Psoas muscle (tissue), 8 donors: ENCODE measurements at regions of chr17 and their contacts with region 1.

Region 1: GRCh38 chr17:32840241-32840640 is 36.7 kb downstream of the MYO1D start:
- DNase-seq: no peak
- ATAC-seq: no peak
- H3K4me3 ChIP-seq: no peak overlapping the region
- H3K27ac ChIP-seq: no peak overlapping the region
- H3K4me1 ChIP-seq: no peaks in the 10 kb centered on the region
- H3K27me3 ChIP-seq: peaks cover 0 to 3% (median 2%) of the 10 kb centered on the region in 3 donors
- CTCF ChIP-seq: no peak

Region 2: GRCh38 chr17:32609085-32609484 is 231.2 kb before region 1 on chr17:
- intact Hi-C with region 1: no loop called
- DNase-seq: peak; percentile 56 to 75
- ATAC-seq: peak; percentile 73 to 90 (median 88)
- H3K4me3 ChIP-seq: no peak overlapping the region
- H3K27ac ChIP-seq: no peak overlapping the region
- H3K4me1 ChIP-seq: no peaks in the 10 kb centered on the region
- H3K27me3 ChIP-seq: no peaks in the 10 kb centered on the region
- CTCF ChIP-seq: peak; percentile 45

Region 3: DNA sequence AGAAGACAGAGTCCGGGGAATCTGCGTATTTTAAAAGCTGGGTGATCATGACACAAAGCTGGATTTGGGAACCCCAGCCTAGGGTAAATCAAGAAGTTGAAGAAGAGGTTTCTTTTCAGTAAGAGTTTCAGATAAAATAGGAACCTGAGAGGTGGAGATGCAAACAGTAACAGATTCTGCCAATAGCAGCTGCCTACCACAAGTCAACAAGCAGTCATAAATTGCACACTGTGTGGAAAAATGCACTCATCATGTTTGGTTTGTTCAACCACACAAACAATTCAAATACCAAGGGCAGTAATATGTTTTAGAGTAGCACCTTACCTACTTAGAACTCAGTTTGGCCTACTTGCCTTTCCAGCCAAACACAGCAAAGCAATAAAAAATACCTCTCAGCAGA is 22.7 kb after region 1 on chr17:
- intact Hi-C with region 1: loop called in 1 of 2 experiments (anchors 2 kb)
- DNase-seq: no peak
- ATAC-seq: no peak
- H3K4me3 ChIP-seq: no peak overlapping the region
- H3K27ac ChIP-seq: no peak overlapping the region
- H3K4me1 ChIP-seq: peaks cover 7% of the 10 kb centered on the region
- H3K27me3 ChIP-seq: no peaks in the 10 kb centered on the region
- CTCF ChIP-seq: no peak

Region 4: DNA sequence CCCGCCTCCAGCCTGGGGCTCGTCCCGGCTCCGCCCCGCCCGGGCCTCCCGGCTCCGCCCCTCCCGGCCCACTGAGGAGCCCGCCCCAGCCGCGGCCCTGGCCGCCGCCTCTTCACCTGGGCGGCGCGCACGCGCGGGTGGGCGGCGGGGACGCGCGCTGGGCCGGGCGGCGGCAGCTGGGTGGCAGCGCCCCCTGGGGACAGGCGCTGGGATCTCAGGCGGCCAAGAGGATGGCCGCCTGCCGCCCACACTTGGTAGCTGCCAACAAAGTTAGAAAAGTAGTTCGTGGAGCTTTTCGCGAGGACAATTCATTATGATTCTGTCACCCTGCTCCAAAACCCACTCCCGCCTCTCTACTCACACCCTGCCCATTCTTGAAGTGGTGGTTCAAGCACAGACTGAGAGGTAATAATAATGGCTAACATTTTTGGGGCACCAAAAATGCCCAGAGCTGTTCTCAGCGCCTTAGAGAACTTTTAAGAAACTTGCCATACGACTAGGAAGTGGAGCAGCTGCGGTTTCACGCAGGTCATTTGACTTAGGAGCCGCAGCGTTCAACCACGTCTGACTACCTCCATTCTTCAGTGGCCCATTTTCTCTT is 37.0 kb after region 1 on chr17:
- intact Hi-C with region 1: no loop called
- DNase-seq: peak; percentile 93 to 95
- ATAC-seq: peak; percentile 100
- H3K4me3 ChIP-seq: peak overlapping the region; percentile 88
- H3K27ac ChIP-seq: peak overlapping the region; percentile 43
- H3K4me1 ChIP-seq: peaks cover 4% of the 10 kb centered on the region
- H3K27me3 ChIP-seq: peaks cover 0 to 3% (median 2%) of the 10 kb centered on the region in 3 donors
- CTCF ChIP-seq: peak; percentile 91